PC-9 (cell line): ENCODE measurements at regions of chr6 and their contacts with region 1.

Region 1: GRCh38 chr6:15245361-15246216 is at the start of gene JARID2:
- DNase-seq: peak; percentile 94 to 97
- H3K4me3 ChIP-seq: peak within 1 kb of the TSS; percentile 93
- H3K27ac ChIP-seq: peak within 1 kb of the TSS; percentile 73
- H3K4me1 ChIP-seq: peaks cover 35% of the 10 kb centered on the region
- H3K27me3 ChIP-seq: no peaks in the 10 kb centered on the region
- CTCF ChIP-seq: no peak
- total RNA-seq, gene JARID2: 31.1 and 35.0 TPM in 2 replicates

Region 2: GRCh38 chr6:14224359-14225103 is 1021.1 kb before region 1 on chr6:
- CTCF ChIA-PET with region 1: no interaction called
- POLR2A ChIA-PET with region 1: interaction called, 10 read pairs
- intact Hi-C with region 1: no loop called
- DNase-seq: no peak
- H3K4me3 ChIP-seq: no peak overlapping the region
- H3K27ac ChIP-seq: no peak overlapping the region
- H3K4me1 ChIP-seq: no peaks in the 10 kb centered on the region
- H3K27me3 ChIP-seq: no peaks in the 10 kb centered on the region
- CTCF ChIP-seq: no peak

Region 3: GRCh38 chr6:14711056-14711703 is 534.4 kb before region 1 on chr6:
- CTCF ChIA-PET with region 1: no interaction called
- POLR2A ChIA-PET with region 1: no interaction called
- intact Hi-C with region 1: loop called (anchors 1 kb)
- DNase-seq: peak; percentile 72 to 82
- H3K4me3 ChIP-seq: no peak overlapping the region
- H3K27ac ChIP-seq: peak overlapping the region; percentile 91
- H3K4me1 ChIP-seq: peaks cover 50% of the 10 kb centered on the region
- H3K27me3 ChIP-seq: no peaks in the 10 kb centered on the region
- CTCF ChIP-seq: peak; percentile 66

Region 4: DNA sequence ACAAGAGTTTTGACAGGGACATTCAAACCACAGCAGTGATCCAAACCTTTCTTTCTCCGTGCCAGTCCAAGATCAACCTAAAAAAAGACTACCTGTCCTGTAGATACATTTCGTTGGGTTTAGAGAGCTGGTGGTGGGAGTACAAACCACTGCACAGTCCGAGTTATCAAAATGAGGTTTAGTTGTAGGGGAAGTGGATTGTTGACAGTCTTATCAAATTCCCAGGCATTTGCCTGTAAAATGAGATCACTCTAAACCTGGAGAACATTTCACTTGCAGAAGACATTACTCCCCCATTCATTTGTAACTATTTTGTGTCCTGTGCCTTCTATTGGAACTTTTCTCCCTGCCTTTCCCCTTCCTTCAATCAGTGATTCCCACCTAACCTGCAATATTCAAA is 469.3 kb before region 1 on chr6:
- CTCF ChIA-PET with region 1: no interaction called
- POLR2A ChIA-PET with region 1: no interaction called
- intact Hi-C with region 1: loop called (anchors 2 kb)
- DNase-seq: peak in 1 of 2 experiments; percentile 9
- H3K4me3 ChIP-seq: no peak overlapping the region
- H3K27ac ChIP-seq: no peak overlapping the region
- H3K4me1 ChIP-seq: 0 out of 2 replicates have a peak, but pooled peaks cover 3% of the 10 kb centered on the region
- H3K27me3 ChIP-seq: no peaks in the 10 kb centered on the region
- CTCF ChIP-seq: no peak

Region 5: GRCh38 chr6:15062516-15063252 is 182.9 kb before region 1 on chr6:
- CTCF ChIA-PET with region 1: no interaction called
- POLR2A ChIA-PET with region 1: no interaction called
- intact Hi-C with region 1: loop called (anchors 1 kb)
- DNase-seq: peak in 1 of 2 experiments; percentile 86
- H3K4me3 ChIP-seq: no peak overlapping the region
- H3K27ac ChIP-seq: no peak overlapping the region
- H3K4me1 ChIP-seq: peaks cover 7% of the 10 kb centered on the region; the same call in 1 of the 2 replicates
- H3K27me3 ChIP-seq: no peaks in the 10 kb centered on the region
- CTCF ChIP-seq: no peak

Region 6: GRCh38 chr6:15327271-15327670 is 81.7 kb after region 1 on chr6:
- CTCF ChIA-PET with region 1: no interaction called
- POLR2A ChIA-PET with region 1: no interaction called
- intact Hi-C with region 1: no loop called
- DNase-seq: no peak
- H3K4me3 ChIP-seq: no peak overlapping the region
- H3K27ac ChIP-seq: no peak overlapping the region
- H3K4me1 ChIP-seq: peaks cover 51% of the 10 kb centered on the region
- H3K27me3 ChIP-seq: no peaks in the 10 kb centered on the region
- CTCF ChIP-seq: no peak

Region 7: GRCh38 chr6:15389765-15390723 is 144.5 kb after region 1 on chr6:
- CTCF ChIA-PET with region 1: no interaction called
- POLR2A ChIA-PET with region 1: no interaction called
- intact Hi-C with region 1: loop called (anchors 2 kb)
- DNase-seq: peak in 1 of 2 experiments; percentile 16
- H3K4me3 ChIP-seq: no peak overlapping the region
- H3K27ac ChIP-seq: no peak overlapping the region
- H3K4me1 ChIP-seq: 0 out of 2 replicates have a peak, but pooled peaks cover 8% of the 10 kb centered on the region
- H3K27me3 ChIP-seq: no peaks in the 10 kb centered on the region
- CTCF ChIP-seq: peak; percentile 72